CD4-positive, alpha-beta T cell (primary cell): ENCODE measurements at regions of chr4 and their contacts with region 1.

Region 1: GRCh38 chr4:102535398-102536082 is 34.4 kb downstream of the NFKB1 start:
- DNase-seq: peak in 2 of 14 experiments; percentile 41 to 51
- ATAC-seq: peak; percentile 69
- H3K4me3 ChIP-seq: no peak overlapping the region
- H3K4me3 Mint-ChIP-seq: no peak overlapping the region
- H3K27ac ChIP-seq: no peak overlapping the region
- H3K27ac Mint-ChIP-seq: peak overlapping the region; percentile 59
- H3K4me1 ChIP-seq: peaks cover 3% of the 10 kb centered on the region
- H3K4me1 Mint-ChIP-seq: peaks cover 70% of the 10 kb centered on the region
- H3K27me3 ChIP-seq: no peaks in the 10 kb centered on the region
- H3K27me3 Mint-ChIP-seq: no peaks in the 10 kb centered on the region
- CTCF ChIP-seq: no peak

Region 2: GRCh38 chr4:102469806-102470205 is 65.7 kb before region 1 on chr4:
- CTCF ChIA-PET with region 1: no interaction called
- POLR2A ChIA-PET with region 1: no interaction called
- intact Hi-C with region 1: loop called in 1 of 2 experiments (anchors 2 kb)
- DNase-seq: peak in 2 of 14 experiments; percentile 5 to 44
- ATAC-seq: peak; percentile 62
- H3K4me3 ChIP-seq: no peak overlapping the region
- H3K4me3 Mint-ChIP-seq: peak overlapping the region; percentile 3
- H3K27ac ChIP-seq: no peak overlapping the region
- H3K27ac Mint-ChIP-seq: peak overlapping the region; percentile 4
- H3K4me1 ChIP-seq: no peaks in the 10 kb centered on the region
- H3K4me1 Mint-ChIP-seq: peaks cover 39% of the 10 kb centered on the region
- H3K27me3 ChIP-seq: no peaks in the 10 kb centered on the region
- H3K27me3 Mint-ChIP-seq: no peaks in the 10 kb centered on the region
- CTCF ChIP-seq: no peak

Region 3: GRCh38 chr4:102518703-102519131 is 16.8 kb before region 1 on chr4:
- CTCF ChIA-PET with region 1: no interaction called
- POLR2A ChIA-PET with region 1: no interaction called
- intact Hi-C with region 1: loop called in 1 of 2 experiments (anchors 2 kb)
- DNase-seq: peak in 6 of 14 experiments; percentile 2 to 80 (median 39)
- ATAC-seq: peak; percentile 83
- H3K4me3 ChIP-seq: no peak overlapping the region
- H3K4me3 Mint-ChIP-seq: peak overlapping the region; percentile 43
- H3K27ac ChIP-seq: peak overlapping the region in 1 of 2 donors; percentile 35
- H3K27ac Mint-ChIP-seq: peak overlapping the region; percentile 80
- H3K4me1 ChIP-seq: peaks cover 18% of the 10 kb centered on the region
- H3K4me1 Mint-ChIP-seq: peaks cover 84% of the 10 kb centered on the region
- H3K27me3 ChIP-seq: no peaks in the 10 kb centered on the region
- H3K27me3 Mint-ChIP-seq: no peaks in the 10 kb centered on the region
- CTCF ChIP-seq: no peak

Region 4: GRCh38 chr4:102564399-102565059 is 29.0 kb after region 1 on chr4:
- CTCF ChIA-PET with region 1: no interaction called
- POLR2A ChIA-PET with region 1: no interaction called
- intact Hi-C with region 1: no loop called
- DNase-seq: peak in 2 of 14 experiments; percentile 67 to 76
- ATAC-seq: no peak
- H3K4me3 ChIP-seq: no peak overlapping the region
- H3K4me3 Mint-ChIP-seq: no peak overlapping the region
- H3K27ac ChIP-seq: no peak overlapping the region
- H3K27ac Mint-ChIP-seq: peak overlapping the region; percentile 40
- H3K4me1 ChIP-seq: peaks cover 20% of the 10 kb centered on the region
- H3K4me1 Mint-ChIP-seq: peaks cover 52% of the 10 kb centered on the region
- H3K27me3 ChIP-seq: no peaks in the 10 kb centered on the region
- H3K27me3 Mint-ChIP-seq: no peaks in the 10 kb centered on the region
- CTCF ChIP-seq: no peak

Region 5: GRCh38 chr4:103137446-103137827 is 601.9 kb after region 1 on chr4:
- CTCF ChIA-PET with region 1: no interaction called
- POLR2A ChIA-PET with region 1: no interaction called
- intact Hi-C with region 1: no loop called
- DNase-seq: no peak
- ATAC-seq: no peak
- H3K4me3 ChIP-seq: no peak overlapping the region
- H3K4me3 Mint-ChIP-seq: no peak overlapping the region
- H3K27ac ChIP-seq: no peak overlapping the region
- H3K27ac Mint-ChIP-seq: no peak overlapping the region
- H3K4me1 ChIP-seq: no peaks in the 10 kb centered on the region
- H3K4me1 Mint-ChIP-seq: peaks cover 8% of the 10 kb centered on the region
- H3K27me3 ChIP-seq: no peaks in the 10 kb centered on the region
- H3K27me3 Mint-ChIP-seq: no peaks in the 10 kb centered on the region
- CTCF ChIP-seq: no peak

Region 6: GRCh38 chr4:103996637-103997036 is 1461.1 kb after region 1 on chr4:
- CTCF ChIA-PET with region 1: no interaction called
- POLR2A ChIA-PET with region 1: no interaction called
- intact Hi-C with region 1: no loop called
- DNase-seq: no peak
- ATAC-seq: no peak
- H3K4me3 ChIP-seq: no peak overlapping the region
- H3K4me3 Mint-ChIP-seq: no peak overlapping the region
- H3K27ac ChIP-seq: no peak overlapping the region
- H3K27ac Mint-ChIP-seq: no peak overlapping the region
- H3K4me1 ChIP-seq: no peaks in the 10 kb centered on the region
- H3K4me1 Mint-ChIP-seq: no peaks in the 10 kb centered on the region
- H3K27me3 ChIP-seq: no peaks in the 10 kb centered on the region
- H3K27me3 Mint-ChIP-seq: no peaks in the 10 kb centered on the region
- CTCF ChIP-seq: no peak